Mammary epithelial cell (primary cell): ENCODE measurements at regions of chr22 and their contacts with region 1.

Region 1: DNA sequence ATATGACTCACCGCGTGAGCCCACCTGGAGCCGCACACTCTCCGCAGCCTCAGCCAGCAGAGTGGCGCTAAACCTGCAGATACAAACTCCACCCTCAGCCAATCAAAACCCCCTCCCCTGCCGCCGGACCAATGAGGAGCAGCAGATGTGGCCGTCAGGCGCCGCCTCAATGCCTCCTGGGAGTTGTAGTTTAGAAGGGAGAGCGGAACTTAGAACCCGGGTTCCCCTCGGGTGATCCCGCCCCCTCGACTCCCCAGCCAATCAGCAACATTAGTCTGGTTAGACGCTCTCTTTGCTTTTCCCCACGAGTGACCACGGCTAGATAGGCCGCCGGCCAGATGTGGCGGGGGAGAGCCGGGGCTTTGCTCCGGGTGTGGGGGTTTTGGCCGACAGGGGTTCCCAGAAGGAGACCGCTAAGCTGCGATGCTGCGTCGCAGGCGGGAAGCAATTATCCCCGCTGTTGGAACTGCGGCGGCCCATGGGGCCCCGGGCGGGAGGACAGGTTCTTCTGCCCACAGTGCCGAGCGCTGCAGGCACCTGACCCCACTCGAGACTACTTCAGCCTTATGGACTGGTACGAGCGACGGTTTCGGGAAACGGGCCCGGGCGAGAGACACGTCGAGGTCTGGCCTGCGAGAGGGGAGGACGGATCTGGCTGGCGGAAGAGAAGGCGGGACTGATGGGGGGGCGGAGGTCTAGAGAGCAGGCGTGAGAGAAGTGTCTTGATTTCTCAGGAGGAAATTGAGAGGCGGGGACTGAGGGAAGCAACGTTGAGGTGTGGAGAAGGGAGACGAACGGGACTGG is at the starts of genes CHEK2 and HSCB:
- DNase-seq: peak; percentile 98
- H3K4me3 ChIP-seq: peak within 1 kb of the TSS; percentile 89 to 93 (median 90)
- H3K27ac ChIP-seq: peak within 1 kb of the TSS; percentile 71
- H3K4me1 ChIP-seq: peaks cover 10% of the 10 kb centered on the region
- H3K27me3 ChIP-seq: no peaks in the 10 kb centered on the region
- CTCF ChIP-seq: no peak
- total RNA-seq, gene CHEK2: 14.2 to 19.2 TPM
- total RNA-seq, gene HSCB: 11.5 to 14.8 TPM

Region 2: DNA sequence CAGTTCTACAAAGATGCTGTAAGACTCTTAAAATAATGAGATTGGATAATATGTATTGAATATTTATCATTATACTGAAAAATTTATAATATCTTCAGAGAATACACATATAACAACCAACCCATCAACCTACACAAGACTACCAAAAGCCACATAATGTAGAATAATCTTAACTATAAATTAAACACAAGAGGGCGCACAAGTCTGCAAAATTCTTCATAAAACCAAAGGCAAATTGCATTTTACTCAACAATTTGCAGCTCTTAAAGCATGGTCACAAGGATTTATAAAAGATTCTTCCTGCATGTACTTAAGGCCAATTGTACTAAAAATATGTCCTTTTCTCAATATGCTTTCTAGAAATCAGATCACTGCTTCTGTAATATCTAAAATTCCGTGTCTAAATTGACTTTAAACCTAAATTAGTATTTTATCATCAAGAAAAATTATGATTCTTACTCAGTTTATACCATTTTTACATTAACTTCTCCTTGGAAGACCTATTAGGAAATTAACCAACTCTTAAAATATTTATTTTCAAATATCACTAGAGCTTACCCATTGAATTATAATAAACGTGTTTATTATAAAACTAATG is 141.3 kb before region 1 on chr22:
- CTCF ChIA-PET with region 1: no interaction called
- dilution Hi-C with region 1: no loop called
- in situ Hi-C with region 1: no loop called
- intact Hi-C with region 1: loop called (anchors 10 kb)
- DNase-seq: peak; percentile 24
- H3K4me3 ChIP-seq: no peak overlapping the region
- H3K27ac ChIP-seq: no peak overlapping the region
- H3K4me1 ChIP-seq: no peaks in the 10 kb centered on the region
- H3K27me3 ChIP-seq: no peaks in the 10 kb centered on the region
- CTCF ChIP-seq: peak; percentile 34 to 46

Region 3: GRCh38 chr22:28791841-28792490 is 50.0 kb after region 1 on chr22:
- CTCF ChIA-PET with region 1: no interaction called
- dilution Hi-C with region 1: no loop called
- in situ Hi-C with region 1: no loop called
- intact Hi-C with region 1: loop called (anchors 5 kb)
- DNase-seq: no peak
- H3K4me3 ChIP-seq: no peak overlapping the region
- H3K27ac ChIP-seq: no peak overlapping the region
- H3K4me1 ChIP-seq: no peaks in the 10 kb centered on the region
- H3K27me3 ChIP-seq: no peaks in the 10 kb centered on the region
- CTCF ChIP-seq: no peak

Region 4: GRCh38 chr22:28873183-28873963 is 131.4 kb after region 1 on chr22:
- CTCF ChIA-PET with region 1: no interaction called
- dilution Hi-C with region 1: no loop called
- in situ Hi-C with region 1: no loop called
- intact Hi-C with region 1: no loop called
- DNase-seq: no peak
- H3K4me3 ChIP-seq: no peak overlapping the region
- H3K27ac ChIP-seq: no peak overlapping the region
- H3K4me1 ChIP-seq: no peaks in the 10 kb centered on the region
- H3K27me3 ChIP-seq: no peaks in the 10 kb centered on the region
- CTCF ChIP-seq: no peak

Region 5: DNA sequence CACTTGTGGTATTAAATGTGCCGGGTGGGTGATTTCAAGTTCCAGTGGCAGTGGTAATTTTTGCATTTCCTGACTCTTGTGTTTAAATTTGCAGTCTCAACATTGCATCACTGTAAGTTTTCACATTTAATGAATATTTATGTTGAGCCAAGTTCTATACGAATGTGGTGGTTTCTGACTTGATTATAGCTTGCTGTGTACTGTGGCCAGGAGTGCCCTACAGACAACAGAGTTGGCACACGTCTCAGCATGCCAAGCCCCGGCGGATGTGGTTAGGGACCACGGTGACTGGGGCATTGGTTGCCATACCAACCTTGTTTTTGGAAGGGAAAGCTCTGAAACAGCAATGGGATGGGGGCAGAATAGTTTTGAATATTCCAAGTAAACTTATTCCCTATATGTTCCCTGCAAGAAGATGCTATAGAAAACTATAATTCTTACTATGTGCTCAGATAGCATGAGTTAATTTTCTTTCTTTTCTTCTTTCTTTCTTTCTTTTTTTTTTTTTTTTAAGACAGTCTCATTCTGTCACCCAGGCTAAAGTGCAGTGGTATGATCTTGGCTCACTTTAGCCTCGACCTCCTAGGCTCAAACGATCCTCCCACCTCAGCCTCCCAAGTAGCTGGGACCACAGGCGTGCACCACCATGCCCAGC is 157.4 kb after region 1 on chr22:
- CTCF ChIA-PET with region 1: no interaction called
- dilution Hi-C with region 1: no loop called
- in situ Hi-C with region 1: no loop called
- intact Hi-C with region 1: no loop called
- DNase-seq: peak; percentile 87
- H3K4me3 ChIP-seq: no peak overlapping the region
- H3K27ac ChIP-seq: peak overlapping the region; percentile 66
- H3K4me1 ChIP-seq: peaks cover 69% of the 10 kb centered on the region
- H3K27me3 ChIP-seq: no peaks in the 10 kb centered on the region
- CTCF ChIP-seq: no peak